AG04450 (cell line): ENCODE measurements at regions of chr20 and their contacts with region 1.

Region 1: DNA sequence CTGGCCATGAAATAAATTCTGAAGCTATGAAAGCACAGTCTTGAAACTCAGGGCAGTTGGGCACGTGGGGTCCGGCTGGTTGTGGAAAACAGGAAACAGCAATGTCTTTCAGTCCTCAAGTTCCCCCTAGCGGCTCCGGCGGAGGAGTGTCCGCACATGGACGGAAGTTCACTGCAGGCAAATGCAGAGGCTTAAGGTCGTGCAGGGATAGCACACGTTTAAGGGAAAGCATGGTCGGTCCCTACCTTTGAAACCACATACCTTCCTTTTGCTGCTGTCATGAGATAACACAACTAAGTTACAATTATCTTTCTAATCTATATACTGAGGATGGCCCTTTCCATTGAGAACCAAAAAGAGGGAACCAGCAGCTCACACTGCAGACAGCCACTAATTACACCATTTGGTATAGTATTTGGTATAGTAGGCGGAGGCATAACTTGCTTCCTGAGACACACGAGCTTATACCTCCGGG is 52.6 kb upstream of the NFATC2 start:
- DNase-seq: peak; percentile 77
- H3K4me3 ChIP-seq: no peak overlapping the region
- H3K27ac ChIP-seq: no peak overlapping the region
- H3K27me3 ChIP-seq: no peaks in the 10 kb centered on the region
- CTCF ChIP-seq: peak; percentile 94

Region 2: GRCh38 chr20:50992733-50993457 is 602.2 kb before region 1 on chr20:
- CTCF ChIA-PET with region 1: interaction called, 53 read pairs
- POLR2A ChIA-PET with region 1: no interaction called
- DNase-seq: no peak
- H3K4me3 ChIP-seq: no peak overlapping the region
- H3K27ac ChIP-seq: no peak overlapping the region
- H3K27me3 ChIP-seq: no peaks in the 10 kb centered on the region
- CTCF ChIP-seq: peak; percentile 75

Region 3: GRCh38 chr20:51372176-51372803 is 222.8 kb before region 1 on chr20:
- CTCF ChIA-PET with region 1: interaction called, 120 read pairs
- POLR2A ChIA-PET with region 1: no interaction called
- DNase-seq: no peak
- H3K4me3 ChIP-seq: no peak overlapping the region
- H3K27ac ChIP-seq: no peak overlapping the region
- H3K27me3 ChIP-seq: no peaks in the 10 kb centered on the region
- CTCF ChIP-seq: peak; percentile 96

Region 4: GRCh38 chr20:51385646-51386530 is 209.2 kb before region 1 on chr20:
- CTCF ChIA-PET with region 1: interaction called, 96 read pairs
- POLR2A ChIA-PET with region 1: interaction called, 5 read pairs
- DNase-seq: no peak
- H3K4me3 ChIP-seq: no peak overlapping the region
- H3K27ac ChIP-seq: no peak overlapping the region
- H3K27me3 ChIP-seq: no peaks in the 10 kb centered on the region
- CTCF ChIP-seq: peak; percentile 72

Region 5: DNA sequence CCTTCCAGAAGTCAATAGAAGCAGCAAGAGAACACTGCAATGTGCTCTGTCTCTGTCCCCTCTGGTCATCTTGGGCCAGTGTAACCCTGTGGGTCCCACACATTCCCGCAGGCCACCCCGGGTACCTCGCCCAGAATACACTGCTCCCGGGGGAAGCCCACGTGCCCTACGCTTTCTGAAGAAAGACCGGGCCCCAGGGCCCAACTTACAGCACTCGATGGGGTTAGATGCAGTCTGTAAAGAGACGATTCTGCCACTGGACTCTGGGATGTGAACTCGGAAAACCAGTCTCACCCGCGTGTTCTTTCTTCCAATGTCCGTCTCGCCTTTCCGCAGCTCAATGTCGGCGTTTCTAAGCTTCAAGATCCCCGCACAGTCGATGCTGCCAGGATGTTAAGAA is 121.3 kb before region 1 on chr20:
- CTCF ChIA-PET with region 1: interaction called, 10 read pairs
- POLR2A ChIA-PET with region 1: no interaction called
- DNase-seq: no peak
- H3K4me3 ChIP-seq: no peak overlapping the region
- H3K27ac ChIP-seq: no peak overlapping the region
- H3K27me3 ChIP-seq: no peaks in the 10 kb centered on the region
- CTCF ChIP-seq: no peak

Region 6: DNA sequence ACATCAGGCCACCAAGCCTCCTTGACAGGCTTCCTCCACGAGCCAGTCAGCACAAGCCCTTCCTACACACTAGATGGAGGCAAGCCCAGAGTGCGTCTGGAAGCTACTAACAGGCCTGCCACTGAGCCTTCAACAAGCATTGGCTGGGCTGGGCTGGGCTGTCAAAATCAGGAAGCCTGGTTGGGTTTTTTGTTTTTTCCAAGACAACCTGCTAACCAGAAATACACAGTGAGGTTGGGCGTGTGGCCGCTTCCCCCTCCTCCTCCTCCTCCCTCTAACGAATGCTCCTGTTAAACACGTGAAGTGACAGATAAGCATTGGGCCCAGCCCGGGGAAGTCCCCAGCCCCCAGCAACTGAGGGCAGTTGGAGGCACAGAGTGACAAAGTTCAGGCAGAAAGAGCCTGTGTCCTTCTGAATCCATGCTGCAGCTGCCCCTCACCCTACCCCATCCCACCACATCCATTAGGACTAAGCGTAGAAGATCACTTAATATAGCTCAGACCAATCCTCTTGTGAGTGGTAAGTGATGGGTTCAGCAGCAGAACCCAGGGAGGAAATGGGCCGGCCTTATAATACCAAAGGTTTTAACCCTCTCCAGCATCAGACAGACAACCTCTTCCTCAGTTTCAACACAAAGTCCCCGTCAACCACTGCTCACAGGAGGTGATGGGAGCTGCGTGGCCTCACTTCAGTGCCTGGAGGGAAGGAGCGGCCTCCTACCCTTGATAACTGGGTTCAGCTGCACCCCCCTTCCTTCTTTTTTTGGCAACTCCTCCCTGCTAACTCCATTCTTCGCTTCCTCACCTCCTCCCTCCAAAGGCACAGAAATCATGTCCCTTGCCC is 53.7 kb before region 1 on chr20:
- CTCF ChIA-PET with region 1: no interaction called
- POLR2A ChIA-PET with region 1: no interaction called
- DNase-seq: no peak
- H3K4me3 ChIP-seq: no peak overlapping the region
- H3K27ac ChIP-seq: no peak overlapping the region
- H3K27me3 ChIP-seq: no peaks in the 10 kb centered on the region
- CTCF ChIP-seq: no peak

Region 7: GRCh38 chr20:51554538-51555165 is 40.4 kb before region 1 on chr20:
- CTCF ChIA-PET with region 1: no interaction called
- POLR2A ChIA-PET with region 1: no interaction called
- DNase-seq: no peak
- H3K4me3 ChIP-seq: no peak overlapping the region
- H3K27ac ChIP-seq: no peak overlapping the region
- H3K27me3 ChIP-seq: no peaks in the 10 kb centered on the region
- CTCF ChIP-seq: no peak

Region 8: GRCh38 chr20:51661609-51662178 is 66.6 kb after region 1 on chr20:
- CTCF ChIA-PET with region 1: no interaction called
- POLR2A ChIA-PET with region 1: no interaction called
- DNase-seq: no peak
- H3K4me3 ChIP-seq: no peak overlapping the region
- H3K27ac ChIP-seq: peak overlapping the region; percentile 94
- H3K27me3 ChIP-seq: no peaks in the 10 kb centered on the region
- CTCF ChIP-seq: no peak